ENCODE measurements at regions of chr9 and their contacts with region 1.

Region 1: GRCh38 chr9:126914458-126915280 is at the start of gene RALGPS1:
- DNase-seq: peak; percentile 92
- H3K4me3 Mint-ChIP-seq: peak within 1 kb of the TSS; percentile 56
- H3K27ac Mint-ChIP-seq: no peak within 1 kb of the TSS
- H3K4me1 Mint-ChIP-seq: peaks cover 7% of the 10 kb centered on the region
- H3K27me3 Mint-ChIP-seq: peaks cover 25% of the 10 kb centered on the region
- total RNA-seq, gene RALGPS1: 2.8 to 3.4 TPM

Region 2: DNA sequence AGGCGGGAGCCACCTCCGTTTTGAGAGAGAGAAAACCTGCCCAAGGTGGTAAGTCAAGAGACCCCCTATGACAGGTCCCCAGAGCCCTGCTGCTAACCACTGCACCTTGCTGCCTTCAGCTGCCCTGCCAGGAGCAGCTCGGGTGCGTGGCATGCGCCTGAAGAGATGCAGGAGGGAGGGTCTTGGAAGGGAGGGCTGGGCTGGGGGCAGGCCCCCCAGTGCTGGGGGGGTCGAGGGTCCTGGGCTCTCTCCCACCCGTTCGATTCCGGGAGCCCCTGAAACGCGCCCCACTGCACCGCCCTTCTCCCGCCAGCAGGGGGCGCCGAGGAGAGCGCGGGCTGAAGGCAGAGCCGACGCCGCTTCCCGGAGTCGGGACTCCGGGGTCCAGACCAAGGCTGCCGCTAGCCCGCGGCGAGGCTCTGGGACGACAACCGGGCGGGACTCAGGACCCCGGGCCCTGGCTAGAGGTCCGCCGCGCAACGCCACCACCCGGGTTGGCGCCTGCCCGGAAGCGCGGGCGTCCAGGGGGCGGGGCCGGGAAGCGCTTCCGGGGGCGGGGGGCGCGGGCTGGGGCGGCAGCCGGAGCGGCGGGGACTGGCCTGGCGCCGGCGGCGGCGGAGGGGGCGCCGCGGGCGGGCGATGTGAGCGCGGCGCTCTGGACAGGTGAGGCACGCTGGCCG is 54.5 kb before region 1 on chr9 and contains the start of gene ZBTB34:
- CTCF ChIA-PET with region 1: interaction called, 10 read pairs
- POLR2A ChIA-PET with region 1: no interaction called
- DNase-seq: peak; percentile 79
- H3K4me3 Mint-ChIP-seq: peak within 1 kb of the TSS; percentile 79
- H3K27ac Mint-ChIP-seq: peak within 1 kb of the TSS; percentile 72
- H3K4me1 Mint-ChIP-seq: peaks cover 25% of the 10 kb centered on the region
- H3K27me3 Mint-ChIP-seq: peaks cover 26% of the 10 kb centered on the region
- total RNA-seq, gene ZBTB34: 8.2 TPM

Region 3: DNA sequence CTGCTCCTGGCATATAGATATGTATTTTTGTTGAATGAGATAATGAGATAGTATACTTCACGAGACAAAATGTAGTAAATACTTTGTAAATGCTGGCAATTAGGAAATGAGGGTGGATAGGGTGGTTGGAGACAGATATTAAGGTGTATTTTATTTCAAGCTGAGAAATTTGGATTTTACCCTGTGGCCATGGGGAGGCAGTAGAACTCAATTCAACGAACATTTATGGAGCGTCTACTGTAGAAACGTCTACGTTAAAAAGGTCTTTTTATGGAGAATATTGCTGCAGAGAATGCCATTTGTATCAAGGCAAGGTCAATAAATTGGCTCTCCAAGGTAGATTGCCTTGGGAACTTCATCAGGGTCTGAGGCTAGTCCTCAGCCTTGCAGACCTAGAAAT is 21.6 kb before region 1 on chr9:
- CTCF ChIA-PET with region 1: no interaction called
- POLR2A ChIA-PET with region 1: no interaction called
- DNase-seq: no peak
- H3K4me3 Mint-ChIP-seq: no peak overlapping the region
- H3K27ac Mint-ChIP-seq: no peak overlapping the region
- H3K4me1 Mint-ChIP-seq: peaks cover 4% of the 10 kb centered on the region
- H3K27me3 Mint-ChIP-seq: peaks cover 2% of the 10 kb centered on the region

Measured in activated CD4-positive, alpha-beta memory T cell treated with anti-CD3 and anti-CD28 coated beads, Interleukin-2, amount 10 ng/mL, durations not matched to agents 7 days and 5 days (primary cell).